ENCODE measurements at regions of chr15 and their contacts with region 1.

Region 1: DNA sequence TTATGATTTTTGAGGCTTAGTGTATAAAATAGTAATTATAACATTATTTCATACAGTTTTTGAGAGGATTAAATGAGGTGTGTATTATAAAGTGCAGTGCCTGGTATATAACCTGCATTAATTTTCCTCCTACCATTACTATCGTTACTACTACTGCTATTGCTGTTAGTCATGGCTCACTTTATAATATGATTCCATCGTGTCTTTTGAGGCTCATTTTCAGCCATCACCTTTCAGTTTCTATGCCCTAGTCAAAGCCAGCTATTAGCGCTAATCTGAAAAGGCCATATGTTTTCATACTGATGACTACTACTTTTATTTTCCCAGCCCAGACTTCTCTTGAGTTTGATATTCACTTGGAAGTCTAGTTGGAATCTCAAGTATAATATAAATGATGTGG is 5.5 kb downstream of the MEF2A start:
- DNase-seq: no peak
- ATAC-seq: no peak
- H3K4me3 ChIP-seq: no peak overlapping the region
- H3K27ac ChIP-seq: peak overlapping the region in 2 of 12 donors; percentile 6
- H3K4me1 ChIP-seq: peaks cover 11 to 87% (median 63%) of the 10 kb centered on the region in 12 donors
- H3K27me3 ChIP-seq: no peaks in the 10 kb centered on the region
- CTCF ChIP-seq: no peak
- POLR2A ChIP-seq: no peak

Region 2: DNA sequence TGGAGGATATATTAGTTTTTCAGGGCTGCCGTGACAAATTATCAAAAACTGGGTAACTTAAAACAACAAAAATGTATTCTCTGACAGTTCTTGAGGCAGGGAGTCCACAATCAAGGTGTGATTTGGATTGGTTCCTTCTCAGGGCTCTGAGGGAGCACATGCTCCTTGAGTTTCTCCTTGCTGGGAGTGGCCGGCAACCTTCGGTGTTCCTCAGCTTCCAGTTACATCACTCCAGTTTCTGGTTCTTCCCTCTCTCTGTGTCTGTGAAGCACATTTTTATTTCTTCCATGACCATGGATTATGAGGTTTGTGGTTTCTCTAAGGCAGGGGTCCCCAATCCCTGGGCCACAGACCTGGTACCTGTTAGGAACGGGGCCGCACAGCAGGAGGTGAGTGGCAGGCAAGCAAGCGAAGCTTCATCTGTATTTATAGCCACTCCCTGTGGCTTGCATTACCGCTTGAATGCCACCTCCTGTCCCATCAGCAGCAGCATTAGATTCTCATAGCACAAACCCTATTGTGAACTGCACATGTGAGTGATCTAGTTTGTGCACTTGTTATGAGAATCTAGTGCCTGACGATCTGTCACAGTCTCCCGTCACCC is 295.7 kb before region 1 on chr15:
- intact Hi-C with region 1: no loop called
- DNase-seq: no peak
- ATAC-seq: no peak
- H3K4me3 ChIP-seq: no peak overlapping the region
- H3K27ac ChIP-seq: no peak overlapping the region
- H3K4me1 ChIP-seq: peaks cover 0 to 14% (median 0%) of the 10 kb centered on the region in 12 donors
- H3K27me3 ChIP-seq: no peaks in the 10 kb centered on the region
- CTCF ChIP-seq: no peak
- POLR2A ChIP-seq: no peak

Region 3: GRCh38 chr15:99522288-99522687 is 49.0 kb before region 1 on chr15:
- intact Hi-C with region 1: no loop called
- DNase-seq: no peak
- ATAC-seq: no peak
- H3K4me3 ChIP-seq: no peak overlapping the region
- H3K27ac ChIP-seq: no peak overlapping the region
- H3K4me1 ChIP-seq: no peaks in the 10 kb centered on the region
- H3K27me3 ChIP-seq: no peaks in the 10 kb centered on the region
- CTCF ChIP-seq: no peak
- POLR2A ChIP-seq: no peak

Region 4: GRCh38 chr15:99614749-99615288 is 43.5 kb after region 1 on chr15:
- intact Hi-C with region 1: loop called in 1 of 10 experiments (anchors 5 kb)
- DNase-seq: no peak
- ATAC-seq: peak; percentile 16 to 79 (median 50)
- H3K4me3 ChIP-seq: no peak overlapping the region
- H3K27ac ChIP-seq: peak overlapping the region in 6 of 12 donors; percentile 1 to 63 (median 14)
- H3K4me1 ChIP-seq: peaks cover 10 to 93% (median 80%) of the 10 kb centered on the region in 12 donors
- H3K27me3 ChIP-seq: no peaks in the 10 kb centered on the region
- CTCF ChIP-seq: no peak
- POLR2A ChIP-seq: no peak

Measured in heart left ventricle (tissue), 16 donors.